ENCODE measurements at regions of chr5 and their contacts with region 1.

Region 1: GRCh38 chr5:131263648-131264450 is at the start of gene CDC42SE2:
- DNase-seq: peak; percentile 85
- H3K4me3 Mint-ChIP-seq: peak within 1 kb of the TSS; percentile 83
- H3K27ac Mint-ChIP-seq: peak within 1 kb of the TSS; percentile 90
- H3K4me1 Mint-ChIP-seq: peaks cover 38% of the 10 kb centered on the region
- H3K27me3 Mint-ChIP-seq: no peaks in the 10 kb centered on the region
- total RNA-seq, gene CDC42SE2: 89.5 and 91.0 TPM in 2 replicates

Region 2: DNA sequence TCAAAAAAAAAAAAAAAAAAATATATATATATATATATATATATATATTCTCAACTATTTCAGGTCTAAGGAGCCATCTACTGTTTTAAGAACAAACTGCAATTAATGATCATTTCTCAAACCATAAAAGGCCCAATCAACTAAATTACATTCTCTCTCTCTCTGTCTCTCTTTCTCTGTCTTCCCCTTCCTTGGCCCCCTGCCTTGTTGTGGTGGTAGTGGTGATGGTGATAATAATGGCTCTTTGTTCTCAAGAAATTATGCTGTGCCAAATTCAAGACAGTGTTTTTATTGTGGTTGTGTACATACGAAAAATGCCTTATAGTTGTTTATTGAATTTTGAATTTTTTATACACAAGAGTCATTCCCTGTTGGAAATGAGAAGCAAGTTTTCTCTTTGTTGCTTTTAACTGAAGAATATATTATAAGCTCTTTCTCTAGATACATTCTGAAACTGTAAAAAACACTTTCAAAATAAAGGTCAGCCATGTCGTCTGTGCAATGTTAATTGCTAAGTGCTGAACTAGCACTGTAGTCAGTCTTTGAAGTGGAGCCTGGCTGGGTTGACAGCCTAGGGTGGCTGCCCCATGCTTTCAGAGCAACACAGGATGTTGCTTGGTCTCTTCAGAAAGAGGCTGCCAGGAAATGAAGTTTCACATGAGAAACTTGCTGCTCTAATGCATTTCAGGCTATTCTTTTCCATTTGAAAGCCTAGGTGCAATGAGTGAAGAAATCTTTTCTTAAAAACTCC is 194.8 kb before region 1 on chr5:
- intact Hi-C with region 1: no loop called
- DNase-seq: peak; percentile 69
- H3K4me3 Mint-ChIP-seq: peak overlapping the region; percentile 69
- H3K27ac Mint-ChIP-seq: peak overlapping the region; percentile 89
- H3K4me1 Mint-ChIP-seq: peaks cover 53% of the 10 kb centered on the region
- H3K27me3 Mint-ChIP-seq: no peaks in the 10 kb centered on the region

Region 3: GRCh38 chr5:131170540-131171275 is 93.1 kb before region 1 on chr5 and contains the start of gene LYRM7:
- intact Hi-C with region 1: loop called (anchors 1 kb)
- DNase-seq: peak; percentile 97
- H3K4me3 Mint-ChIP-seq: peak within 1 kb of the TSS; percentile 99
- H3K27ac Mint-ChIP-seq: peak within 1 kb of the TSS; percentile 95
- H3K4me1 Mint-ChIP-seq: peaks cover 34% of the 10 kb centered on the region
- H3K27me3 Mint-ChIP-seq: no peaks in the 10 kb centered on the region
- total RNA-seq, gene LYRM7: 14.0 and 20.3 TPM in 2 replicates